CD8-positive, alpha-beta T cell (primary cell): ENCODE measurements at regions of chr6 and their contacts with region 1.

Region 1: DNA sequence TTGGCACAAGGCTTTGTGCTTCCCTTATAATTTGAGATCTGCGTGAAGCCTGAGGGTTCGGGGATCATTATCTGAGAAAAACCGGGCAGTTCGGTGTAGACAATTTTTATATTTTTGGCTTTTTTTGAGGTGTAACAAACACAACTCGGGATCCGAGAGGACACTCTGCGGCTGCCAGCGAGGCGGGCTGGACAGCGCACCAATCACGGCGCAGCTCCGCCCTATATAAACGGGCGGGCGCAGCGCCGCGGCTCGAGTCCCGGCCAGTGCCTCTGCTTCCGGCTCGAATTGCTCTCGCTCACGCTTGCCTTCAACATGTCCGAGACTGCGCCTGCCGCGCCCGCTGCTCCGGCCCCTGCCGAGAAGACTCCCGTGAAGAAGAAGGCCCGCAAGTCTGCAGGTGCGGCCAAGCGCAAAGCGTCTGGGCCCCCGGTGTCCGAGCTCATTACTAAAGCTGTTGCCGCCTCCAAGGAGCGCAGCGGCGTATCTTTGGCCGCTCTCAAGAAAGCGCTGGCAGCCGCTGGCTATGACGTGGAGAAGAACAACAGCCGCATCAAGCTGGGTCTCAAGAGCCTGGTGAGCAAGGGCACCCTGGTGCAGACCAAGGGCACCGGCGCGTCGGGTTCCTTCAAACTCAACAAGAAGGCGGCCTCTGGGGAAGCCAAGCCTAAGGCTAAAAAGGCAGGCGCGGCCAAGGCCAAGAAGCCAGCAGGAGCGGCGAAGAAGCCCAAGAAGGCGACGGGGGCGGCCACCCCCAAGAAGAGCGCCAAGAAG is 69.0 kb downstream of the HFE start:
- DNase-seq: peak; percentile 77 to 96 (median 84)
- ATAC-seq: peak; percentile 39
- H3K4me3 ChIP-seq: peak overlapping the region; percentile 51 to 86
- H3K4me3 Mint-ChIP-seq: peak overlapping the region; percentile 94
- H3K27ac ChIP-seq: peak overlapping the region; percentile 85 to 98
- H3K27ac Mint-ChIP-seq: peak overlapping the region; percentile 98
- H3K4me1 ChIP-seq: peaks cover 20% of the 10 kb centered on the region
- H3K4me1 Mint-ChIP-seq: peaks cover 34% of the 10 kb centered on the region
- H3K27me3 ChIP-seq: no peaks in the 10 kb centered on the region
- H3K27me3 Mint-ChIP-seq: no peaks in the 10 kb centered on the region
- CTCF ChIP-seq: no peak

Region 2: GRCh38 chr6:26054857-26055669 is 101.2 kb before region 1 on chr6:
- CTCF ChIA-PET with region 1: no interaction called
- POLR2A ChIA-PET with region 1: interaction called, 108 read pairs
- intact Hi-C with region 1: loop called in 1 of 2 experiments (anchors 2 kb)
- DNase-seq: peak; percentile 71 to 94 (median 88)
- ATAC-seq: peak; percentile 72
- H3K4me3 ChIP-seq: peak overlapping the region; percentile 75 to 85
- H3K4me3 Mint-ChIP-seq: peak overlapping the region; percentile 96
- H3K27ac ChIP-seq: peak overlapping the region; percentile 85 to 96
- H3K27ac Mint-ChIP-seq: peak overlapping the region; percentile 99
- H3K4me1 ChIP-seq: peaks cover 17% of the 10 kb centered on the region
- H3K4me1 Mint-ChIP-seq: peaks cover 23% of the 10 kb centered on the region
- H3K27me3 ChIP-seq: no peaks in the 10 kb centered on the region
- H3K27me3 Mint-ChIP-seq: no peaks in the 10 kb centered on the region
- CTCF ChIP-seq: no peak

Region 3: DNA sequence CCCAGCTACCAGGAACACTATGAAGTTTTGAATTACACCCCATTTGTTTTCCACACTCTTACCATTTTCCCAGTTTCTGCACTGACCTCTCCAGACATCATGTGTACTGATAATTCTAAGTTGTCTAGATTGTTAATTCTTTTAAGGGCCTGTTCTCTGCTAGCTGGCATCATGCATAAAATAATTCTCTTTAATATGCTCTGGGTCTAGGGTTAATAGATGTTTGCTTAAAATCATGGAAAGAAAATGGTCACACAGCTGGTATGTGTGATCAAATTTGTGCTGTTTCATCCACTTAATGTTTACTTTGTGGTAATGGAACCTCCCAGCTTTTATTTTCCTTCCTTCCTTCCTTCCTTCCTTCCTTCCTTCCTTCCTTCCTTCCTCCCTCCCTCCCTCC is 19.9 kb before region 1 on chr6:
- CTCF ChIA-PET with region 1: interaction called, 4 read pairs
- POLR2A ChIA-PET with region 1: interaction called, 1,910 read pairs
- intact Hi-C with region 1: no loop called
- DNase-seq: no peak
- ATAC-seq: no peak
- H3K4me3 ChIP-seq: no peak overlapping the region
- H3K4me3 Mint-ChIP-seq: no peak overlapping the region
- H3K27ac ChIP-seq: no peak overlapping the region
- H3K27ac Mint-ChIP-seq: no peak overlapping the region
- H3K4me1 ChIP-seq: no peaks in the 10 kb centered on the region
- H3K4me1 Mint-ChIP-seq: peaks cover 36% of the 10 kb centered on the region
- H3K27me3 ChIP-seq: no peaks in the 10 kb centered on the region
- H3K27me3 Mint-ChIP-seq: no peaks in the 10 kb centered on the region
- CTCF ChIP-seq: no peak

Region 4: DNA sequence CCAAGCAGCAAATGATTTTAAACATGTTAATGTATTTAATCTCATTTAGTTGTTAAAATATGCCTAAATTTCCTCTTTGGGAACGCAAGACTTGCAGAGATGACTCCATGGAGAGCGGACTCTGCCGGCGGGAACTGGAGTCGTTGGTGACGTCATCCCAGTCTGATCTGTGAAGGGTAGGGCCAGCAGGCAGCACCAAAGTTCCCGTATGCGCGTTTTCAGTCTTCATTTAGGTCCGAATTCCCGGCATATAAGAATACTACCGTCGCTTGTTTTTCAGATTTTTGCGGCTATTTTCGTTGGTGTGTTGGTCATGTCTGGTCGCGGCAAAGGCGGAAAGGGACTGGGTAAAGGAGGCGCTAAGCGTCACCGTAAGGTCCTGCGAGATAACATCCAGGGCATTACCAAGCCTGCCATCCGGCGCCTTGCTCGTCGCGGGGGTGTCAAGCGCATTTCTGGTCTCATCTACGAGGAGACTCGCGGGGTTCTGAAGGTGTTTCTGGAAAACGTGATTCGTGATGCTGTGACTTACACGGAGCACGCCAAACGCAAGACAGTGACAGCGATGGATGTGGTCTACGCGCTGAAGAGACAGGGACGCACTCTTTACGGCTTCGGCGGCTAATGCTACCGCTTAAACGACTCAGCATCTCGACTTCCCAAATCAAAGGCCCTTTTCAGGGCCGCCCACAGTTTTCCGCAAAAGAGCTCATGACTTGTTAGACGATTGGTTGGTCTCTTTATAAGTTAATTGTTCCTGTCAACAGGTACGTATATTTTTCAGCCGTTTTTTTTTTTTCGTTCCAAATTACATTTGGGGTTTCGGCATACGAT is 48.3 kb after region 1 on chr6:
- CTCF ChIA-PET with region 1: interaction called, 22 read pairs
- POLR2A ChIA-PET with region 1: interaction called, 1,041 read pairs
- intact Hi-C with region 1: loop called in 1 of 2 experiments (anchors 1 kb)
- DNase-seq: peak; percentile 75 to 98 (median 84)
- ATAC-seq: peak; percentile 74
- H3K4me3 ChIP-seq: peak overlapping the region; percentile 54 to 70
- H3K4me3 Mint-ChIP-seq: no peak overlapping the region
- H3K27ac ChIP-seq: peak overlapping the region; percentile 91
- H3K27ac Mint-ChIP-seq: no peak overlapping the region
- H3K4me1 ChIP-seq: peaks cover 31% of the 10 kb centered on the region
- H3K4me1 Mint-ChIP-seq: peaks cover 23% of the 10 kb centered on the region
- H3K27me3 ChIP-seq: no peaks in the 10 kb centered on the region
- H3K27me3 Mint-ChIP-seq: no peaks in the 10 kb centered on the region
- CTCF ChIP-seq: no peak

Region 5: DNA sequence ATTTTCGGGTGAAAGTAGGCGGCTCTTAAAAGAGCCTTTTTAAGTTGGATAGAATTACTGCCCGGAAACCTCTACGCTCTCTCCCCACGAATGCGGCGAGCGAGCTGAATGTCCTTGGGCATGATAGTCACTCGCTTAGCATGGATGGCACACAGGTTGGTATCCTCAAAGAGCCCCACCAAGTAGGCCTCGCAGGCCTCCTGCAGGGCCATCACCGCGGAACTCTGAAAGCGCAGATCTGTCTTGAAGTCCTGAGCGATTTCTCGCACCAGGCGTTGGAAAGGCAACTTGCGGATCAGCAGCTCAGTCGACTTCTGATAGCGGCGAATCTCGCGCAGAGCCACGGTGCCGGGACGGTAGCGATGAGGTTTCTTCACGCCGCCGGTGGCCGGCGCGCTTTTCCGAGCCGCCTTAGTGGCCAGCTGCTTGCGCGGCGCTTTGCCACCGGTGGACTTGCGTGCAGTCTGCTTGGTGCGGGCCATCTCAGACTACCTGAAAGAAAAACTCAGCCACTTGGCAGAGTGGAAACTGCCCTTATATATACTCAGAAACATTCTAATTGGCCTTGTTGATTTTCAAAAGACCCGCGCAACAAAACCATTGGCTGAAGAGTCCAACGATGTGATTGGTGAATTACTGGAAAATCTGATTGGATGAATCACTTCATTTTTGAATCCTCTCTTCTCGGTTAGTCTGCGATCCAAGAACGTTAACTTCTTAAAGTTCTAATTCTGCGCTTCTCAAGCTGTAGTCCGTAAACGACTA is 114.8 kb after region 1 on chr6:
- CTCF ChIA-PET with region 1: no interaction called
- POLR2A ChIA-PET with region 1: interaction called, 103 read pairs
- intact Hi-C with region 1: loop called in 1 of 2 experiments (anchors 1 kb)
- DNase-seq: peak; percentile 68 to 91 (median 80)
- ATAC-seq: peak; percentile 22
- H3K4me3 ChIP-seq: peak overlapping the region; percentile 65 to 67
- H3K4me3 Mint-ChIP-seq: no peak overlapping the region
- H3K27ac ChIP-seq: peak overlapping the region; percentile 73 to 92
- H3K27ac Mint-ChIP-seq: peak overlapping the region; percentile 73
- H3K4me1 ChIP-seq: peaks cover 22% of the 10 kb centered on the region
- H3K4me1 Mint-ChIP-seq: peaks cover 13% of the 10 kb centered on the region
- H3K27me3 ChIP-seq: no peaks in the 10 kb centered on the region
- H3K27me3 Mint-ChIP-seq: no peaks in the 10 kb centered on the region
- CTCF ChIP-seq: no peak

Region 6: DNA sequence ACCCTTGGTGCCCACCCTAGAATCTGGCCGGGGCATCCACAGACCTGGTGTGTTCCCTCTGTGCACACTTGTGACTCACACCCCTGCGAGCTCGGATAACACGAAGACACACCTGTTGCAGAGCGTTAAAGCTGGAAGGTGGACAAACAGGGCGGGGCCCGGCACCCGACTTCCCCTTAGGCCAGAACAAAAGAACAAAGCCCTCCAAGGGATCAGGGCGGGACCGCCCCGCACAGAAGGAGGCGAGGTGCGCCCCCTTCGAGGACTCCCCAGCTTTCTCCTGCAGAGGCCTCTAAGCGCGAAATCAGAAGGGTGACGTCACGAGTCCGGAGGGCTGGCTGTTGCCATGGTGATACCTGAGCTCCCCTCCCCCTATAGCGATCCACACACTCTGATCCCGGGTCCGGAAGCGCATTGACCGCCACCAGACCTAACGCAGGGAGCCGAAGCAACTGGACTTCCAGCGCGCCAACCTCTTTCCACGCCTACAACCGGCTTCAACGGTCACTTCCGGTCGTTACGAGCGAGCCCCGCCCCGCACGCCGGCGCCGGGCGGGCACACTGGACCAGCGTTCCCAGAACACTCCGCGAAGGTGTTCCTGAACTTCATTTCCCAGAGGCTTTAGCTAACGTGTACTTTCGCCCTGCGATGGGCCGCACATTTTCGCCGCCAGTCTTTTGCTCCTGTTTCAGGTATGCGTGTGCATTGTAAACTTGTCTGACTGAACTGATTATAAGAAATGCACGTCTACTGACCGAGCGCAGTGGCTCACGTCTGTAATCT is 1316.5 kb after region 1 on chr6 and contains the start of gene ZNF184:
- CTCF ChIA-PET with region 1: no interaction called
- POLR2A ChIA-PET with region 1: no interaction called
- intact Hi-C with region 1: loop called in 1 of 2 experiments (anchors 10 kb)
- DNase-seq: peak; percentile 71 to 94 (median 84)
- ATAC-seq: peak; percentile 63
- H3K4me3 ChIP-seq: peak within 1 kb of the TSS; percentile 80 to 90
- H3K4me3 Mint-ChIP-seq: peak within 1 kb of the TSS; percentile 96
- H3K27ac ChIP-seq: peak within 1 kb of the TSS; percentile 94 to 96
- H3K27ac Mint-ChIP-seq: peak within 1 kb of the TSS; percentile 96
- H3K4me1 ChIP-seq: peaks cover 26% of the 10 kb centered on the region
- H3K4me1 Mint-ChIP-seq: peaks cover 48% of the 10 kb centered on the region
- H3K27me3 ChIP-seq: no peaks in the 10 kb centered on the region
- H3K27me3 Mint-ChIP-seq: no peaks in the 10 kb centered on the region
- CTCF ChIP-seq: no peak
- total RNA-seq, gene ZNF184: 31.8 to 32.9 TPM

Region 7: GRCh38 chr6:27871924-27872638 is 1715.8 kb after region 1 on chr6:
- CTCF ChIA-PET with region 1: no interaction called
- POLR2A ChIA-PET with region 1: interaction called, 47 read pairs
- intact Hi-C with region 1: no loop called
- DNase-seq: peak; percentile 72 to 97 (median 85)
- ATAC-seq: peak; percentile 75
- H3K4me3 ChIP-seq: peak overlapping the region; percentile 54 to 67
- H3K4me3 Mint-ChIP-seq: peak overlapping the region; percentile 82
- H3K27ac ChIP-seq: peak overlapping the region; percentile 81 to 86
- H3K27ac Mint-ChIP-seq: peak overlapping the region; percentile 98
- H3K4me1 ChIP-seq: peaks cover 20% of the 10 kb centered on the region
- H3K4me1 Mint-ChIP-seq: peaks cover 36% of the 10 kb centered on the region
- H3K27me3 ChIP-seq: peaks cover 0 to 3% of the 10 kb centered on the region in 2 experiments
- H3K27me3 Mint-ChIP-seq: no peaks in the 10 kb centered on the region
- CTCF ChIP-seq: peak; percentile 48